Tibial artery (tissue), 4 donors: ENCODE measurements at regions of chr13 and their contacts with region 1.

Region 1: DNA sequence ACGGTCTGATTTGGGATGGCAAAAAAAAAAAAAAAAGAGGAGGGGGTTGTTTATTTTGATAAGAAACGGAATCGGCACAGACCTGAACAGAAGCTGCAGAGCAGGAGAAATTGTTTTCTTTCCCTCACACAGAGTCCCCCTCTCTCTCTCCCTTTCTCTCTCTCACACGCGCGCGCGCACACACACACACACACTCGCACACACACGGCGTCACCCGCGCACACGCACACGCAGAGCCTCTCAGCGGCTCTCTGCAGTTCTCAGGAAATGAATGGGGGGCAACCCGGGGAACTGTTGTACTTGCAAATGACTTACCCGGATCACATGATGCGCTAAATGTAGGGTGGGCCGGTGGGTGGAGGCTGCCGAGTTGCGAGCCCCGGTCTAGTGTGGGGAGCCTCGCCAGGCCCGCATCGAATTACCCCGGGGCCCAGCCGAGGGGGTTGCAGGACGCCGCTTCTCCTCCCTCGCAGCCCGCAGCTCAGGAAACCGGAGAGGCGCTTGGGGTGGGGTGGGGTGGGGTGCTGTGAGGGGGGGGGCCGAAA is 475 bp downstream of the KLF12 start:
- DNase-seq: peak; percentile 88 to 93
- H3K4me3 ChIP-seq: peak overlapping the region; percentile 73 to 93
- H3K27ac ChIP-seq: peak overlapping the region; percentile 97 to 98
- H3K4me1 ChIP-seq: peaks cover 0 to 33% (median 19%) of the 10 kb centered on the region in 4 donors
- H3K27me3 ChIP-seq: no peaks in the 10 kb centered on the region
- CTCF ChIP-seq: peak in 1 of 2 experiments; percentile 12

Region 2: GRCh38 chr13:73765651-73766384 is 367.9 kb before region 1 on chr13:
- intact Hi-C with region 1: no loop called
- DNase-seq: peak; percentile 74 to 78
- H3K4me3 ChIP-seq: peak overlapping the region; percentile 1 to 3
- H3K27ac ChIP-seq: peak overlapping the region; percentile 47 to 67
- H3K4me1 ChIP-seq: peaks cover 0 to 35% (median 26%) of the 10 kb centered on the region in 4 donors
- H3K27me3 ChIP-seq: no peaks in the 10 kb centered on the region
- CTCF ChIP-seq: no peak

Region 3: DNA sequence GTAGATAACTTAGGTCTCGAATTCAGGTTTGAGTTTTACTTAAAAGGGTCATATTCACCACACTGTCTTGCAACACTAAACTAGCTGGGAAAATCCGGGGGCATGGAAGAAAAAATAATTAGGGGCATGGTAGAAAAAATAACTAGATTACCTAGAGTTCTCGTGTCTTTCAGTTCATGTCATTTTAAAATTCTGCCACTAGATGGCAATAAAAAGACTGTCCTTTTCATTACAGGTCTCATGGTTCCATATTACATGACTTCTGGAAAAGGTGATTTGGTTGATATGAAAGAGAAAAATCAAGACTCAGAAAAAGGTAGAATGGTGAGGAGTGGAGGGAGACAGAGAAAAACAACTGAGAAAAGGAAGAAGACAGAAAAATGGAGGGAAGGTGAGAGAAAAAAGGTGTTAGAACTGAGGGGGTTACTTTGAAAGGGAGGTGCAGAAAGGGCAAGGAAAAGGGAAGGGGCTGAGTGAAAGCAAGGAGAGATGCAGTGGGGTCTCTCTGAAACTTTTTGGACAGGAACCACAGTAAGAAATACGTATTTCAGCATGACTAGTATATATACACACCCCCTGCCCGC is 298.5 kb before region 1 on chr13:
- intact Hi-C with region 1: loop called (anchors 10 kb)
- DNase-seq: no peak
- H3K4me3 ChIP-seq: no peak overlapping the region
- H3K27ac ChIP-seq: no peak overlapping the region
- H3K4me1 ChIP-seq: peaks cover 0 to 25% (median 0%) of the 10 kb centered on the region in 4 donors
- H3K27me3 ChIP-seq: no peaks in the 10 kb centered on the region
- CTCF ChIP-seq: peak; percentile 62 to 76

Region 4: GRCh38 chr13:74062933-74063332 is 70.8 kb before region 1 on chr13:
- intact Hi-C with region 1: loop called (anchors 10 kb)
- DNase-seq: peak; percentile 70 to 81
- H3K4me3 ChIP-seq: peak overlapping the region; percentile 29 to 45
- H3K27ac ChIP-seq: peak overlapping the region; percentile 77 to 80
- H3K4me1 ChIP-seq: peaks cover 0 to 85% (median 29%) of the 10 kb centered on the region in 4 donors
- H3K27me3 ChIP-seq: no peaks in the 10 kb centered on the region
- CTCF ChIP-seq: no peak

Region 5: DNA sequence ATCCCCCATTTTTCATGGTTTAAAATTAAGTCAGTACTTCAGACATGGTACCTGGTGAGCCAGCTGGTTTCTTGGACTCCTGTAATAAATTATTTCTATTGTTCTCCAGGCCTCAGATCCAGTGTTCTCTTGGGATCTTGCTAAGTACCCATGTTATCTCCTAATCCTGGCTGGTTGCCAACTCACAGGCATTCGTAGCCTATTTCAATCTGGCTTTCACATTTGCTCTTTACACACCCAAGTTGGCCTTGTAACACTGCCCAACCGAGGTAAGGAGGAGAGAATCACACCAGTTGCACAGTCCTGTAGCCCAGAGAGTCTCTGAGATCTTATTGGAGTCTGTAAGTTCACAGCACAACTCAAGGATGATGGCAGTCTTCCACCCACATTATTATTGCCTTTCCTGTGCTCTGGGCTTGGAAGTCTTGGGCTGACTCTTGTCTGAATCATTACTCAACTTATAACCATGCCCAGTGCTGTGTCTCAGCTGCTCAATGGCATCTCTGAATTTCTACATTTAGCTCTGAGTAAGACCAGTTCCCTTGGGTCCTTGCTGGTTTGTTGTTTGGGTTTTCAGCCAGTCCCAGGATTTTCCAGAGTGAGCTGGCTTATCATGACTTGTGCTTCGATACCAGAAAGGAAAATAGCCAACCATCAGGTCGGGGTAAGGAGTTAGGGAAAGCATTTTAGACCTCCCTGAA is 77.1 kb after region 1 on chr13:
- intact Hi-C with region 1: loop called (anchors 10 kb)
- DNase-seq: peak; percentile 65 to 79
- H3K4me3 ChIP-seq: no peak overlapping the region
- H3K27ac ChIP-seq: peak overlapping the region; percentile 74 to 76
- H3K4me1 ChIP-seq: peaks cover 0 to 23% (median 8%) of the 10 kb centered on the region in 4 donors
- H3K27me3 ChIP-seq: no peaks in the 10 kb centered on the region
- CTCF ChIP-seq: no peak

Region 6: DNA sequence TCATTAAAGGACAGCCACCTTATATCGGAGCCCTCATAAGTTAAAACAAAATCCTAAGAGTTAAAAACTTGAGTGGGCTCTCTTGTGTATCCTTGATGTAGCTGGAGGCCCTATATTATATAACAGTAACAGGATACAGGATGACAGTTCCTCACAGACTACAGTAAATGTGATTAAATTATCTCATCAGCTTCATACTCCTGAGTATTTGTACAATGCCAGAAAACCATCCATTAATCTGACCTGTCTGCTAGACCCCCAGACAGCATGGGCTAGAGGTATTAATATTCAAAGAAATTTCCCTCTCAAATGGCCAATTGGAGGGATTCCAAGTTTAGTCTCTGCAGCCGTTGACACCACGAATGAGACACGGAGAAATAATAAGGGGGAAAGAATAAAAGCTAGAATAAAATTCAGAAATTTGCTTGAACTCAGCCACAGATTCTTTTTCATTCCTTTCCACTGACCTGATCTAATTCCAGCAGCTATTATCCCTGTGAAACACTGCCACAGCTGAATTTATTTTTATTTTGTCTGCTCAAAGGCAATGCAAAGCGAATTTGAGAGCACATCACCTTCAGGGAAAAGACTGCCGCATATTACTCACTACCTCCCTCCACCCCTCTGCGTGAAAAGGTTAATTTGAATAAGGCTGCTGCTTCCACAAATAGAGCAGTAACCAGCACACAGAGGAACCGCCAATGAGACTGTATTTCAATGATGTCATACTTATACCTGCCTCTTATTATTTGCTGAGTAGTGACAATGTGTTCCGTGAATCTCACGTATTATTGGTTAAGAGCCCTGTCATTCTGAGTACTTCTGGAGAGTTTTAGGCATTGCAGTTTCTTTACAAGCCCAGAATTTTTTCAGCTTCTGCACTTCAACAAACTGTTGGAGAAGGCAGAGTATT is 156.4 kb after region 1 on chr13:
- intact Hi-C with region 1: loop called (anchors 10 kb)
- DNase-seq: no peak
- H3K4me3 ChIP-seq: peak overlapping the region; percentile 6 to 31
- H3K27ac ChIP-seq: no peak overlapping the region
- H3K4me1 ChIP-seq: peaks cover 0 to 32% (median 19%) of the 10 kb centered on the region in 4 donors
- H3K27me3 ChIP-seq: no peaks in the 10 kb centered on the region
- CTCF ChIP-seq: peak in 1 of 2 experiments; percentile 8

Region 7: GRCh38 chr13:74325106-74325505 is 191.4 kb after region 1 on chr13:
- intact Hi-C with region 1: no loop called
- DNase-seq: no peak
- H3K4me3 ChIP-seq: no peak overlapping the region
- H3K27ac ChIP-seq: no peak overlapping the region
- H3K4me1 ChIP-seq: peaks cover 0 to 8% (median 0%) of the 10 kb centered on the region in 4 donors
- H3K27me3 ChIP-seq: no peaks in the 10 kb centered on the region
- CTCF ChIP-seq: no peak